HepG2 (cell line): ENCODE measurements at regions of chr7 and their contacts with region 1.

Region 1: DNA sequence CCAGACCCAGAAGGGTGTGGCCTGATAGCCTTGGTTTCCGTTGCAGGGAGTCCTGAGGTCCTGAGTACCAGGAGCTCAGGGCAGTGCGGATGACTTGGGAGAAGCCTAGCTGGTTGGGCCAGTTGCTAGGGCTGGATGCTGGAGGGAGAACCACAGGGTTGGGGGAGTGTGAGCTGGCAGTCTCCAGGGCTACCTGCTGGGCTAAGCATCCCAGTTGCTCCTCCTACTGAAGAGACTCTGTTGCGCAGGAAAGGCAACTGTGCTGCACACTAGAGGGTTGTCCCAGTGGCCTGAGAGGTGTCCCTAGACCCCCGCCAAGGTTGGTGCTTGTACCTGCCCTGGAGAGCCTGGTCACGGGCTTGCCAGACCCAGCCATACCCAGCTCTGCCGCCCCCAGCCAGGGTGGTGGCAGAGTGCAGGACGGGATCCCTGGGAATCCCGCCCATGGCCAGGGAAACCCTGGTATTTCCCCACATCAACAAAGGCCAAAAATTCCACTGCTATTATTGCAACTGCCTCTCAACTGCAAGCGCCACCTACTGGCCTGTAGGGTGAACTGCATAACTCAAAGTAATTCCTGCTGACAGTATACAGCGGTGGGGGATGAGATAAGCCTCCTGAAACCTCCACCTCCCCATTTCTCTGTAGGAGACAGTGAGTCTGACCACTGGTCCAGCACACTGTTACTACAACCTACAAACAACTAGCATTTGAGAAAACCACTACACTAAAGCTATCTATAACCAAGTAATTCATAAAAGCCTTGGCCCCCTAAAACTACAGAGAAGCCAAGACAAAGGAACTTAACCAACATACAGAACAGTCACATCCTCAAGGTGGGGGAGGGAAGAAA is 67.6 kb upstream of the DDC start:
- DNase-seq: peak; percentile 70
- ATAC-seq: peak; percentile 85
- H3K4me3 ChIP-seq: no peak overlapping the region
- H3K27ac ChIP-seq: no peak overlapping the region
- H3K4me1 ChIP-seq: peaks cover 18% of the 10 kb centered on the region
- H3K27me3 ChIP-seq: no peaks in the 10 kb centered on the region
- CTCF ChIP-seq: peak; percentile 90
- EP300 ChIP-seq: no peak
- POLR2A ChIP-seq: no peak
- RAD21 ChIP-seq: peak; percentile 78

Region 2: DNA sequence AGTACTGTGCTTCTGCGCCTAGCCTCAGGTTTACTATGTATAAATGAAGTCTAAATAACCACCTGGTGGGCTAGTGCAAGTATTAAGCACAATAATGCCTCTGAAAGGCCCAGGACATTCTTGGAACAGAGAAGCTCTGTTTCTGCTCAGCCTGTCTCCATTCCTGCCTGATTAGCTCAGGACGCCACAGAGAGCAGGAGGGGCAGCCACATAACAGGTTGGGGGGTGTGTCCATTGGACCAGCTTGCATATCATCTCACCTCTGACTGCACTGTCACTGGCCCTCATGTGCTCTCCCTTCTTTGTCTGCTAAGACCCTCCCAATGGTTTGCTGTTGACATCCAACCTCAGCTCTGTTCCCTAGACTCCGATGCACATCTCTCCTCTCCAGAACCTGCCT is 381.0 kb before region 1 on chr7:
- CTCF ChIA-PET with region 1: no interaction called
- POLR2A ChIA-PET with region 1: no interaction called
- in situ Hi-C with region 1: no loop called
- intact Hi-C with region 1: no loop called
- DNase-seq: no peak
- ATAC-seq: no peak
- H3K4me3 ChIP-seq: no peak overlapping the region
- H3K27ac ChIP-seq: no peak overlapping the region
- H3K4me1 ChIP-seq: no peaks in the 10 kb centered on the region
- H3K27me3 ChIP-seq: no peaks in the 10 kb centered on the region
- CTCF ChIP-seq: no peak
- EP300 ChIP-seq: no peak
- POLR2A ChIP-seq: no peak
- RAD21 ChIP-seq: no peak

Region 3: GRCh38 chr7:50467817-50468610 is 164.8 kb before region 1 on chr7:
- CTCF ChIA-PET with region 1: interaction called, 31 read pairs
- POLR2A ChIA-PET with region 1: no interaction called
- in situ Hi-C with region 1: loop called (anchors 5 kb)
- intact Hi-C with region 1: loop called (anchors 1 kb)
- DNase-seq: peak; percentile 50
- ATAC-seq: peak; percentile 90
- H3K4me3 ChIP-seq: no peak overlapping the region
- H3K27ac ChIP-seq: no peak overlapping the region
- H3K4me1 ChIP-seq: peaks cover 8% of the 10 kb centered on the region
- H3K27me3 ChIP-seq: no peaks in the 10 kb centered on the region
- CTCF ChIP-seq: peak; percentile 97
- EP300 ChIP-seq: no peak
- POLR2A ChIP-seq: no peak
- RAD21 ChIP-seq: peak; percentile 96

Region 4: GRCh38 chr7:50595491-50596102 is 37.2 kb before region 1 on chr7:
- CTCF ChIA-PET with region 1: interaction called, 5 read pairs
- POLR2A ChIA-PET with region 1: no interaction called
- in situ Hi-C with region 1: no loop called
- intact Hi-C with region 1: loop called (anchors 2 kb)
- DNase-seq: peak; percentile 35
- ATAC-seq: peak; percentile 65
- H3K4me3 ChIP-seq: no peak overlapping the region
- H3K27ac ChIP-seq: peak overlapping the region; percentile 12
- H3K4me1 ChIP-seq: peaks cover 64% of the 10 kb centered on the region
- H3K27me3 ChIP-seq: no peaks in the 10 kb centered on the region
- CTCF ChIP-seq: peak; percentile 77
- EP300 ChIP-seq: no peak
- POLR2A ChIP-seq: no peak
- RAD21 ChIP-seq: peak; percentile 49

Region 5: DNA sequence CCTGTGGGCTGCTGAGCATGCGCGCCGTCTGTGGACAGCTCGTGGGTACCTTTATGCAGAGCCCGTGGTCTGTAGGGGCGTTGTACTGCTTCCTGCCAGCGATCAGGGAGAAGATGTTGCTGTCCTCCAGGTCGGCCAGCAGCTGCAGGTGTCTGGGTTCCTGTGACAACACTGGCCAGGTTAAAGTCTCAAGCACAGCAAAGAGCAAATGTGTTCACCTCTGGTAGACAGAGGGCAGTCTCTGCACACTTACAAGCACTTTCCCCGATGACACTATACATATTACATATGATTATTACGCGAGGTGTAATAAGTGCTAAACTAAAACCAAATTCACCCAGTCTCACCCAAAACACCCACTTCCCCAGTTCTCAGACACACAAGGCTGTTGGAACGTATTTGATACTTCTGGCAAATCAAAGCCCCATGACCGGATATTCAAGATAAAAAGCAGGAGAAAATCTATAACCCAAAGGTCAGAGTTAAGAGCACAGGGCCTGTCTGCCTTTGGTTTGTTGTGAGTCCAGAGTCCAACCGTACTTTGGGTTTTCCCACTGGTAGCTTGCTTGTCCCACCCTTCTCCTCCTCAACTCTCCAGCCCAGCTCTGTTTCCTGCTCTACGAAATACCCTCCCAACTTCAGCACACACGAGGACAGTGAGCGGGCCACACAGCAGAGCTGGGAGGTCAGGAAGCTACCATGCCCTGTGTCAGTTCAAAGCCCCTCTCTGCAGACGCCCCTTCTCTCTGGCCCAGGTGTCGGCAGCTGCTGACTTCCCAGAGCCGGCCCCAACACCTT is 17.9 kb before region 1 on chr7:
- CTCF ChIA-PET with region 1: interaction called, 4 read pairs
- POLR2A ChIA-PET with region 1: interaction called, 5 read pairs
- in situ Hi-C with region 1: no loop called
- intact Hi-C with region 1: loop called (anchors 2 kb)
- DNase-seq: peak; percentile 74
- ATAC-seq: peak; percentile 87
- H3K4me3 ChIP-seq: peak overlapping the region in 2 of 3 experiments; percentile 9 to 42; a peak in 3 of 6 replicates
- H3K27ac ChIP-seq: peak overlapping the region; percentile 63
- H3K4me1 ChIP-seq: peaks cover 29% of the 10 kb centered on the region
- H3K27me3 ChIP-seq: no peaks in the 10 kb centered on the region
- CTCF ChIP-seq: peak; percentile 78
- EP300 ChIP-seq: peak in 1 of 2 experiments; percentile 77; a peak in 2 of 4 replicates
- POLR2A ChIP-seq: no peak
- RAD21 ChIP-seq: no peak